BJ (cell line): ENCODE measurements at regions of chr9 and their contacts with region 1.

Region 1: DNA sequence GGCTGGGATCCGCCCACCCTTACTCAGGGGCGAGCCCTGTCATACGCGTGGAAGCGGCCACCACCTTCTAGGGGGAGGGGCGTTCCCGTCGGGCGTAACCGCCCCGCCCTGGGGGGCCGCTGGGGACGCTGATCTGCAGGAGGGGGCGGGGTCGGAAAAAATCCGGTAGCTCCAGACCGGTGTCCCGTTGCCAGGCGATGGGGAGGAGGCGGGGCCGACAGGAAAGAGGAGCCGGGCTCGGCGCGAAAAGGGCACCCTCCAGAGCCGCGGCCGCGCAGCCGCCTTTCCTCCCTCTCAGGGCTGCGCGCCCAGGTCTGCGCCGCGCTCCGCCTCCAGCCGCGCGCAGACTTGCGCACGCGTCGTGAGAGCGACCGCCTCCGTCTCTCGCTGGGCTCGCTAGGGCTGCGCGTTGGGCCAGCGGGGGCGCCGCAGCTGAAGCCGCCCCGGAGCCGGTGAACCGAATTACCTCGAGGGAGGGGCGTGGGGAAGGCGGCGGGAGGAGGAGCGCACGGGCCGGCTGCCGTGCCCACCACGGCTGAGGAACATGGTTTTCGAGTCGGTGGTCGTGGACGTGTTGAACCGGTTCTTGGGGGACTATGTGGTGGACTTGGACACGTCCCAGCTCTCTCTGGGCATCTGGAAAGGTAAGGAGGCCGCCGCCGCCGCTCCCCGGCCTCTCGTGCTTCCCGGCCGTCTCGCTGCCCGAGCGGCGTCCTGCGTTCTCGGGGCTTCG is at the start of gene VPS13A:
- DNase-seq: peak; percentile 56
- H3K4me3 ChIP-seq: peak within 1 kb of the TSS; percentile 90
- H3K27me3 ChIP-seq: no peaks in the 10 kb centered on the region
- CTCF ChIP-seq: peak; percentile 31
- polyA plus RNA-seq, gene VPS13A: 7.5 and 15.9 TPM in 2 replicates

Region 2: DNA sequence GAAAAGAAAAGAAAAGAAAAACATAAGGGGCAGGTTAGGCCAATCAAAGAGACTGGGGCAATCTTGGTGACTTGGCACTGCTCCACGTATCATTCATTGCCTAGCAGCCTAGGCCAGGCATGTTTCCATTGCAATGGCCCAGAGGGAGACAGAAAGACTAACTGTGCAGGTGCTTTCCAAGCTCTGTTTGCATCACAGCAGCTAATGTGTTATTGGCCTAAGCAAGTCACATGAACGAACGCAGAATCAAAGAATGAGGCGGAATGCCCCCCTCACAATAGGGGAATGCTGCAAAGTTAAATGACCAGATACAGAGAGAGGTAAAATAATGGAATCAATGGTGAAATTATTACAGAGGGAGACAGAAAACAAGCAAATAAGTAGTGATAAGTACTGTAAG is 11.1 kb before region 1 on chr9:
- CTCF ChIA-PET with region 1: interaction called, 22 read pairs
- POLR2A ChIA-PET with region 1: no interaction called
- DNase-seq: no peak
- H3K4me3 ChIP-seq: no peak overlapping the region
- H3K27me3 ChIP-seq: peaks cover 4% of the 10 kb centered on the region
- CTCF ChIP-seq: no peak